Left cardiac atrium (tissue), 4 donors: ENCODE measurements at regions of chr9 and their contacts with region 1.

Region 1: GRCh38 chr9:131478421-131478868 is 24.3 kb upstream of the POMT1 start:
- DNase-seq: peak; percentile 55
- ATAC-seq: peak in 1 of 2 donors; percentile 9

Region 2: DNA sequence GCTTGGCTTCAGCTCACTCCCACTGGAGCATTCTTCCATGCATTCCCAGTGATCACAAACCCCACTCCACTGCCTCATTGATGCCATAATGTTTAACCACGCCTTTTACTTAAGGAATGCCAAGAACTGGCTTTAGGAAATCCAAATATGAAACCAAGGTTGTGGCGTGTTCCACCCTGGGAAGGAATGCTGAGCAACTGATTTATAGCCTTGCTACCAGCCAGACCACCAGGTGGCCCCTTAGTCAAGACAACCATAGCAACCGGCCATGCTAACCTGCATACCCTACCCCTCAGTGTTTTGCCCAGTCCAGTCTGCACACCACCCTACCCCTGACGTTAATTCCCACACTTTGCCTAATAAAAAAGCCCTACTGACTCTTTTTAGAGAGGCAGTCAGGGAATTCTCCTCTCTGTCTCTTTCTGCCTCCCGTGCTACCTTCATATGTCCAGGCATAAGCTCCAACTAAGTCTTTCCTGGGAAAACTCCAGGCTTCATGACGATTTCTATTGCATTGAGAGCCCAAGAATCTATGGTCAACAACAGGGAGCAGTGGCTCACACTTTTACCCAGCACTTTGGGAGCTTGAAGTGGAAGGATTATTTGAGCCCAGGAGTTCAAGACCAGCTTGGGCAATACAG is 111.6 kb before region 1 on chr9:
- intact Hi-C with region 1: loop called (anchors 5 to 10 kb)
- DNase-seq: no peak
- ATAC-seq: peak; percentile 86 to 87

Region 3: DNA sequence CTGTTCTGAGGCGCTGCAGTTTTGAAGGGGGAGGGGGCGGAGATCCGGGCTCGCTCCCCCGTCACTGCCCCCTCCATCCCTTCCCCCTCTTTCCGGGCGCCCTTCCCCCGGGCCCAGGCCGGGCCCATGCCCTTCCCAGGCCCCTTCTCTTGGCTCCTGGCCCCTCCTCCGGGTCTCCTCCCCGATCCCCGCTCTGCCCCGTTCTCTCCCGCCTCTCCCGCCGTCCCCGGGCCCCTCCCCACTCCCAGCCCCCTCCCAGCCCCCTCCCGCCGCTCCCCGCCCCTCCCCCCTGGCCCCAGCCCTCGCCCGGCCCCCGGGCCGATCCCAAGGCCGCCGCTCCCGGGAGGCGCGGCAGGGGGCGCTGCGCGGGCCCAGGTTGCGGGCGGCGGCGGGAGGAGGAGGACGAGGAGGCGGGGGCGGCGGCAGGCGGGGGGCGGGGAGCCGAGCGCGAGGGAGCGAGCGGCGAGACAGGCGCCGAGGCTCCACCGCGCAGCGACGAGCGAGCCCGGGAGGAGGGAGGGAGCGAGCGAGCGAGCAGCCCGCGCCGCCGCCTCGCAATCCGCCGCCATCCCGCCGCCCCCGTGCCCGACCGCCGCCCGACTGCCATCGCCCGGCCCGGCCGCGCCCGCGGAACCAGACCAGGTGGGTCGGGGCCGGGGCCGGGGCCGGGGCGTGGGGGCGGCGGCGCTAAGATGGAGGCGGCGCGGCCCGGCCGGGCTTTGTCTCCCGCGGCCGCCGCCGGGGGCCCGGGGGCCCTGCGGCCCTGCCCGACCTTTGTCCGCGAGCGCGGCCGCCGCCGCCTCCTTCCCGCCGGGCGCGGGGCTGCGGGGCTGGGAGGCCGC is 84.6 kb before region 1 on chr9 and contains the start of gene PRRC2B:
- intact Hi-C with region 1: loop called in 1 of 2 experiments (anchors 10 kb)
- DNase-seq: peak; percentile 89
- ATAC-seq: peak; percentile 84 to 85
- total RNA-seq, gene PRRC2B: 136 to 155 TPM